ENCODE measurements at regions of chr3 and their contacts with region 1.

Region 1: DNA sequence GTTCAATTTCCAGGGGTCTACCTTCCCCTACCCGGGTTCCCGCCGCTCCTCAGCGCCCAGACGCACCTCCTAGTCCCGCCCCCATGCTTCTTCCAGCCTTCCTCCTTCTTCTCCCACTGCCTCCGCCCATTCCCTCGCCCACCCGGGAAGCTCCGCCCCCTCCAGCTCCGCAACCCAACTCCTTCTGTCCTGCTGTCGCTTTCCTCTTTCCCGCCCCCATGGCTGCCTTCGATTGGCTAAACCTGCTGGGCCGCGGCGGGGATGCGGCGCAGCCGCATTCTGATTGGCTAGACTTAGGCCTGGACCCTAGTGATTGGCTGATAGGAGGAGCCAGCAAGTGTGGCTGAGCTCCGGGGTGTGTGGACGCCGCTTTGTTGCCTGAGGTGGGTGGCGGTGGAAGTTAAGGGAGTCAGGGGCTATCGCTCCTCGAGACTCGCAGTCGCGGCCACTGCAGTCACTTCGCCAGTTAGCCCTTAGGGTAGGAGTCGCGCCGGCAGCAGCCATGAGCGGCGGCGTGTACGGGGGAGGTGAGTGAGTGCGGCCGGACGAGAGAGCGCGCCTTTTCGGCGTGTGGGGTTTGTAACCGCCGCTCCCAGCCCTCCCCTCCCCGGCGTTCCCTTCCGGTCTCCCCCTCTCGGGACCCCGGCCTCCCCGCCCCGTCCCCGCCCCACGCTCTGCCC is at the start of gene ACTL6A:
- DNase-seq: peak; percentile 99
- ATAC-seq: peak; percentile 95
- H3K4me3 ChIP-seq: peak within 1 kb of the TSS; percentile 86
- H3K27ac ChIP-seq: peak within 1 kb of the TSS; percentile 93
- H3K4me1 ChIP-seq: peaks cover 2% of the 10 kb centered on the region; the same call in 1 of the 2 replicates
- H3K27me3 ChIP-seq: no peaks in the 10 kb centered on the region
- CTCF ChIP-seq: no peak
- POLR2A ChIP-seq: peak; percentile 83
- RAD21 ChIP-seq: no peak
- total RNA-seq, gene ACTL6A: 70.1 and 115 TPM in 2 replicates

Region 2: GRCh38 chr3:179015551-179016020 is 547.1 kb before region 1 on chr3:
- CTCF ChIA-PET with region 1: no interaction called
- POLR2A ChIA-PET with region 1: no interaction called
- dilution Hi-C with region 1: no loop called
- in situ Hi-C with region 1: loop called (anchors 25 kb)
- intact Hi-C with region 1: loop called (anchors 2 kb)
- DNase-seq: peak; percentile 83
- ATAC-seq: peak; percentile 93
- H3K4me3 ChIP-seq: no peak overlapping the region
- H3K27ac ChIP-seq: no peak overlapping the region
- H3K4me1 ChIP-seq: peaks cover 3% of the 10 kb centered on the region
- H3K27me3 ChIP-seq: no peaks in the 10 kb centered on the region
- CTCF ChIP-seq: peak; percentile 89
- POLR2A ChIP-seq: no peak
- RAD21 ChIP-seq: peak; percentile 83

Region 3: DNA sequence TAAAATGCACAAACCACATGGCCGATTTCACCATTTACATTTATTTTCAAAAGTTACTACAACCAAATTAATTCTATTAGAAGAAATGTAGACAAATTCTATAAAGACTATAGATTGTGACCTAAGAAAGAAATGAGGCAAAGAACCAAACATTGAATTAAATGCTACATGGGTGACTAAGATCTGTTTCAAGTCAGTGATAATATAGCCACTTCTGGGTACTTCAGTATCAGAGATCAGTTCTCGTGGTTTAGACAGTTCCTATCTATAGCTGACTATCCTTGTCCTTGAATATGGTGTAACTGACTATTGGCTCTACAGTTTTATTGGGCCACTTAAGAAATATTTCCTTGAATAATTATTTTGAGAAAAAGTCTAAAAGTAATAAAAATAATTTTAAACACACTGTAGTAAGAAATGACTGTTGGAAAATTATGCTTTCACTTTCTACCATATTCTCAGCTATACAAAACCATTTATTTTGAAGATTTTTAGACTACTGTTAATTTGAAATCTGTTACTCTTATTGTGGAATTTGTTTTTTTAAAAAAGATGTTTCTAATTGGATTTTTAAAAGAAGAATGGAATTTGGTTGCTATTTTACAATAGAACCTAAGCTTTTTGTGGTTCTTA is 325.9 kb before region 1 on chr3:
- CTCF ChIA-PET with region 1: no interaction called
- POLR2A ChIA-PET with region 1: no interaction called
- dilution Hi-C with region 1: no loop called
- in situ Hi-C with region 1: no loop called
- intact Hi-C with region 1: no loop called
- DNase-seq: no peak
- ATAC-seq: no peak
- H3K4me3 ChIP-seq: no peak overlapping the region
- H3K27ac ChIP-seq: no peak overlapping the region
- H3K4me1 ChIP-seq: no peaks in the 10 kb centered on the region
- H3K27me3 ChIP-seq: no peaks in the 10 kb centered on the region
- CTCF ChIP-seq: no peak
- POLR2A ChIP-seq: no peak
- RAD21 ChIP-seq: no peak

Region 4: GRCh38 chr3:179322286-179323196 is 240.2 kb before region 1 on chr3 and contains the start of gene ZNF639:
- CTCF ChIA-PET with region 1: no interaction called
- POLR2A ChIA-PET with region 1: no interaction called
- dilution Hi-C with region 1: no loop called
- in situ Hi-C with region 1: no loop called
- intact Hi-C with region 1: loop called (anchors 1 kb)
- DNase-seq: peak; percentile 82
- ATAC-seq: peak; percentile 90
- H3K4me3 ChIP-seq: peak within 1 kb of the TSS; percentile 97
- H3K27ac ChIP-seq: peak within 1 kb of the TSS; percentile 94
- H3K4me1 ChIP-seq: peaks cover 3% of the 10 kb centered on the region; the same call in 1 of the 2 replicates
- H3K27me3 ChIP-seq: no peaks in the 10 kb centered on the region
- CTCF ChIP-seq: peak; percentile 90
- POLR2A ChIP-seq: peak; percentile 77
- RAD21 ChIP-seq: peak; percentile 38; the same call in 1 of the 2 replicates
- total RNA-seq, gene ZNF639: 50.5 and 57.8 TPM in 2 replicates

Region 5: GRCh38 chr3:179421500-179421899 is 141.2 kb before region 1 on chr3:
- CTCF ChIA-PET with region 1: no interaction called
- POLR2A ChIA-PET with region 1: no interaction called
- dilution Hi-C with region 1: no loop called
- in situ Hi-C with region 1: no loop called
- intact Hi-C with region 1: loop called (anchors 1 kb)
- DNase-seq: peak; percentile 41
- ATAC-seq: peak; percentile 64
- H3K4me3 ChIP-seq: no peak overlapping the region
- H3K27ac ChIP-seq: no peak overlapping the region
- H3K4me1 ChIP-seq: no peaks in the 10 kb centered on the region
- H3K27me3 ChIP-seq: no peaks in the 10 kb centered on the region
- CTCF ChIP-seq: peak; percentile 58
- POLR2A ChIP-seq: no peak
- RAD21 ChIP-seq: peak; percentile 62

Region 6: DNA sequence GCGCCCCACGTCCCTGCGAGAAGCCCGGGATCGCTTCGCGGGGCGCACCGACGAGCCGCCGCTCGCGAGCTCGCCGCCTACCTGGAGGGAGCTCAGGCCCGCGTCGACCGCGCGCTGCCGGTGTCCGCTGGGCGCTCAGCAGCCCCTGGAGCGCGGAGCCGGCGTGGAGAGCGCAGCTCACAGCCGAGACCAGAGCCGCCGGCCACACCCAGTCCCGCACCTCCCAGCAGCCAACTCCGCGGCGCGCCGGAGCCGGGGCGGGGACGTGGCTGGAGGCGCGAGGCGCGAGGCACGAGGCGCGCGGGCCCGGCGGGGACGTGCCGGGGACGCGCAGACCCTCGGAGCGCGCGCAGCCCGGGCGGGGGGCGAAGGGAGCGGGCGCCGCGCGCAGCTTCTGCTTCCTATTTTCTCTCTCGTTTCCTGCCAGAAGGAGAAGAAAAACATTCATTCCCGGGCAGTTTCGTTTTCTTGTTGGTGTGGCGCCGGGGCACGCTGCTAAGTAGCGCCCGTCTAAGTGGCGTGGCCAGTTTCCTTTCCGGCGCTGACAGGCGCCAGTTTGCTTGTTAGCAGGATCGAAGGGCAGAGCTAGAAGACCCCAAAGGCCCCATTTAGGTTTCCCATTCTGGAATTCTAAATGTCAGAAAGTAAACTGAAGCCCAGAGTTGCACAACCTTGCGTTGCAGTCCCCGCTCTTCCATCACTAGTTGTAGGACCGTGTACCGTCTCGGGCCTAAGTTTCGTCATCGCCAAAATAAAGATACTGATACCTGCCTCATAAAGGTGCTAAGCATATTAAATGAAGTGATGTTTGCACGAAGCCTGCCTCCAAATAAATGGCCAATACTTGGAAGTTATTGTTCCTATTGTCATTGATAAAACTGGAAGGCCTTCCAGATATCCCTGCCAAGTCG is 111.2 kb before region 1 on chr3 and contains the start of gene GNB4:
- CTCF ChIA-PET with region 1: no interaction called
- POLR2A ChIA-PET with region 1: no interaction called
- dilution Hi-C with region 1: no loop called
- in situ Hi-C with region 1: loop called (anchors 5 kb)
- intact Hi-C with region 1: loop called (anchors 1 kb)
- DNase-seq: peak; percentile 82
- ATAC-seq: peak; percentile 93
- H3K4me3 ChIP-seq: peak within 1 kb of the TSS; percentile 81
- H3K27ac ChIP-seq: peak within 1 kb of the TSS; percentile 97
- H3K4me1 ChIP-seq: peaks cover 3% of the 10 kb centered on the region
- H3K27me3 ChIP-seq: no peaks in the 10 kb centered on the region
- CTCF ChIP-seq: no peak
- POLR2A ChIP-seq: peak; percentile 56; the same call in 1 of the 2 replicates
- RAD21 ChIP-seq: no peak
- total RNA-seq, gene GNB4: 112 and 131 TPM in 2 replicates

Region 7: DNA sequence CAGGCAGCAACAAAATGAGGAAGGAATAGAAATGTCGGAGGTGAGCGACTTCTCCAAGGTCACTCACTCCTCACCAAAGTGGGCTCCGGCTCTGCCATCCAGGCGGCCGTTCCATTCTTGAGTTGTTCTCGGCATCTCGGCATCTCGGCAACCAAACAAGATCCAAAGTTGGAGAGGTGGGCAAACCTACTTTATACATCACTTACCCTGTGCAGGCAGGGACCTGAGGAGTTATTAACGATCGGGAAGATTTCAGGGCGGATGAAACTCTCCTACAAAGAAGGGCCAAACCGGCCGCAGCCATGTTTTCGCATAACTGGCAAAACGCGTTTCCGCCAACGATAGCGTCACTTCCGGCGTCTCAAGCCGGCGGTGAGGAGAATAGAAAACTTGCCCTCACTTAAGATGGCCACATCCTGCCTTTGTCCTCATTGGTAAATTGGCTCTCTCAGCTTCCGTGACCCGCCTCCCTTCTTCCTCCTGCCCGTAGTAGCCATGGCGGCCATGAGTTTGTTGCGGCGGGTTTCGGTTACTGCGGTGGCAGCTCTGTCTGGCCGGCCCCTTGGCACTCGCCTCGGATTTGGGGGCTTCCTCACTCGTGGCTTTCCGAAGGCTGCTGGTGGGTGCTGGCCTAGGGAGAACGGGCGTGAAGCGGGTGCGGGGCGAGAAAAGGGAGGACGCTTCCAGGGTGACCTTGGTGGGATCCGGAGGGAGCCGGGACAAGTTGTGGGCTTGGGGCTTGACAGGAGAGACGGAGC is 41.8 kb after region 1 on chr3 and contains the starts of genes MRPL47 and NDUFB5:
- CTCF ChIA-PET with region 1: no interaction called
- POLR2A ChIA-PET with region 1: no interaction called
- dilution Hi-C with region 1: no loop called
- in situ Hi-C with region 1: no loop called
- intact Hi-C with region 1: no loop called
- DNase-seq: peak; percentile 97
- ATAC-seq: peak; percentile 100
- H3K4me3 ChIP-seq: peak within 1 kb of the TSS; percentile 85
- H3K27ac ChIP-seq: peak within 1 kb of the TSS; percentile 92
- H3K4me1 ChIP-seq: no peaks in the 10 kb centered on the region; the same call in 1 of the 2 replicates
- H3K27me3 ChIP-seq: no peaks in the 10 kb centered on the region
- CTCF ChIP-seq: no peak
- POLR2A ChIP-seq: peak; percentile 93
- RAD21 ChIP-seq: no peak
- total RNA-seq, gene MRPL47: 41.4 and 47.2 TPM in 2 replicates
- total RNA-seq, gene NDUFB5: 17.2 and 40.0 TPM in 2 replicates

Measured in IMR-90 (cell line).